ENCODE measurements at regions of chr1 and their contacts with region 1.

Region 1: DNA sequence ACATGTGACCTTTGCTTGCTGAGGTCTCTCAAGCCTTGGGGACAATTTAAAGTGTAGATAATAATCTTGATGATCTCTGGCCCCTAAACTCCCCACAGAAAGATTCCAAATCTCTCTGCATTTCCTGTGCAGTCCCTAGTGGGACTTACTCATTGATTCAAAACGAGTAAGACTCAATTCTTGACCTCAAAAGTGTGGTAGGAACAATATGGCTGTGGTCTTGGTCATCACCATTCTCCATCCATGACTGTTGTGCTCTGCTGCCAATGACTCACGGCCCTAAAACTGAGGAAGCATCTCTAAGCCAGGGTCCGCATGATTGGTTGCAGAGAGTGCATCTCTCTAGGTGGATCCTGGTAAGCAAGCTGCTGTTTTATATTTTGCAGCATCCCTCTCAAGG is 268.0 kb downstream of the PTGER3 start:
- DNase-seq: no peak
- H3K4me3 Mint-ChIP-seq: no peak overlapping the region
- H3K27ac Mint-ChIP-seq: no peak overlapping the region
- H3K4me1 Mint-ChIP-seq: peaks cover 15% of the 10 kb centered on the region
- H3K27me3 Mint-ChIP-seq: peaks cover 4% of the 10 kb centered on the region

Region 2: GRCh38 chr1:70752511-70752910 is 27.1 kb before region 1 on chr1:
- intact Hi-C with region 1: loop called (anchors 1 kb)
- DNase-seq: no peak
- H3K4me3 Mint-ChIP-seq: no peak overlapping the region
- H3K27ac Mint-ChIP-seq: no peak overlapping the region
- H3K4me1 Mint-ChIP-seq: peaks cover 37% of the 10 kb centered on the region
- H3K27me3 Mint-ChIP-seq: no peaks in the 10 kb centered on the region

Region 3: DNA sequence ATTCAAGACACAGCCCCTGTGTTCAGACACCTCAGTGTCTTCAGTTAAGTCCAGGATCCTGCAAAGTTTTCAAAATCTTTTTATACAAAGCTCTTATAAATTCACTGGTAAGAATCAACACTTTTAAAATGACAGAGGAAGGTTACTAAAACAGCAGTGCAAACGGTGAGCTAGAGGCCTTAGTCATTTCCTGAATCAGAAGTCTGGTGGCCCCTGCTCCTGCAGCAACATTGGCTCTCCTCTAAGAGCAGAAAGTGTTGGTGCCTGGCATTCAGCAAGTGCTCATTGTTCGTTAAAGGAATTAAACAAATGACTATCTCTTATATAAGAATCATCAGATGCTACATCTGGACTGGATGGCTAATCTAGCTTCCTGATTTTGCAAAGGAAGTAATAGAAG is 14.8 kb before region 1 on chr1:
- intact Hi-C with region 1: loop called (anchors 1 kb)
- DNase-seq: no peak
- H3K4me3 Mint-ChIP-seq: no peak overlapping the region
- H3K27ac Mint-ChIP-seq: no peak overlapping the region
- H3K4me1 Mint-ChIP-seq: peaks cover 10% of the 10 kb centered on the region
- H3K27me3 Mint-ChIP-seq: no peaks in the 10 kb centered on the region